ENCODE measurements at regions of chr7 and their contacts with region 1.

Region 1: GRCh38 chr7:106153891-106154449 is 41.9 kb upstream of the SYPL1 start:
- DNase-seq: peak; percentile 86
- H3K4me3 ChIP-seq: no peak overlapping the region; a peak in 1 of 4 replicates
- H3K27ac ChIP-seq: no peak overlapping the region
- H3K4me1 ChIP-seq: peaks cover 10 to 19% of the 10 kb centered on the region in 2 experiments; a peak in 2 of 4 replicates
- H3K27me3 ChIP-seq: no peaks in the 10 kb centered on the region; the same call in 1 of the 2 replicates
- CTCF ChIP-seq: peak; percentile 100
- EP300 ChIP-seq: no peak
- RAD21 ChIP-seq: peak; percentile 100

Region 2: GRCh38 chr7:106056513-106057203 is 97.3 kb before region 1 on chr7:
- CTCF ChIA-PET with region 1: interaction called, 593 read pairs
- POLR2A ChIA-PET with region 1: interaction called, 10 read pairs
- DNase-seq: peak; percentile 88
- H3K4me3 ChIP-seq: no peak overlapping the region
- H3K27ac ChIP-seq: peak overlapping the region in 1 of 2 experiments; percentile 96; a peak in 2 of 4 replicates
- H3K4me1 ChIP-seq: peaks cover 0 to 28% of the 10 kb centered on the region in 2 experiments; a peak in 2 of 4 replicates
- H3K27me3 ChIP-seq: no peaks in the 10 kb centered on the region
- CTCF ChIP-seq: peak; percentile 95
- EP300 ChIP-seq: 0 out of 4 replicates have a peak, but pooled peaks of 1 of the 2 experiments have one; percentile 26
- RAD21 ChIP-seq: peak; percentile 100

Region 3: DNA sequence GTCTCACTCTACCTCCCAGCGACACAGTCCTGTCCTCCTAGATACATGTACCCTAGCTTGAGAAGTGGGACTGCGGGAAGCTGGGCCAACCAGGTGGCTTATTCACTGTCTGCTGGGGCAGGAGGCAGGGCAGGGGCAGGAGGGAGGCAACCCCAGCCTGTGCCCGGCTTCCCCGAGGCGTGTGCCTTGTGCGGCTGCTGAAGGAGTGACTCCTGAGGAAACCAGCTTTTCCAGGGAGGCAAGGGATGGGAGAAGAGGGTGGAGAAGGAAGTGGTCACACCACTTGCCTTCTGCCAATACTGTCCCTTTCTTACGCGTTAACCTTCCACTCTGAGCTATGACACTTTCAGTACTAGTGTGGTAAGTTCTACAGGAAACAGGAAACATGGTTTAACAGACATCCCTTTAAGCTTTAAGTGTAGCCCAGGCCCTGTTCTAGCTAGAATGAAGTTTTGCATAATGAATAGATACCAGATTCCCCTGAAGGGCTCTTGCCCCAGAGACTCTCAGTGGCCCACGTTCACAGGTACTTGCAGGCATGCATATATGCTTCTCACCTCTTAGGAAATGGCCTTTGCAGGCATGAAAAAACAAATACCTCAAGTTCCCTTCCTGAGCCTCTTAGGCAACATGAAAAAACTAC is 82.5 kb before region 1 on chr7:
- CTCF ChIA-PET with region 1: interaction called, 109 read pairs
- POLR2A ChIA-PET with region 1: interaction called, 3 read pairs
- DNase-seq: peak; percentile 49
- H3K4me3 ChIP-seq: no peak overlapping the region
- H3K27ac ChIP-seq: peak overlapping the region in 1 of 2 experiments; percentile 81; a peak in 2 of 4 replicates
- H3K4me1 ChIP-seq: peaks cover 20 to 61% of the 10 kb centered on the region in 2 experiments
- H3K27me3 ChIP-seq: no peaks in the 10 kb centered on the region
- CTCF ChIP-seq: no peak
- EP300 ChIP-seq: no peak
- RAD21 ChIP-seq: no peak

Region 4: GRCh38 chr7:106102387-106102966 is 51.5 kb before region 1 on chr7:
- CTCF ChIA-PET with region 1: interaction called, 16 read pairs
- POLR2A ChIA-PET with region 1: no interaction called
- DNase-seq: no peak
- H3K4me3 ChIP-seq: no peak overlapping the region
- H3K27ac ChIP-seq: no peak overlapping the region
- H3K4me1 ChIP-seq: peaks cover 0 to 2% of the 10 kb centered on the region in 2 experiments; a peak in 1 of 4 replicates
- H3K27me3 ChIP-seq: no peaks in the 10 kb centered on the region
- CTCF ChIP-seq: no peak
- EP300 ChIP-seq: no peak
- RAD21 ChIP-seq: no peak

Region 5: GRCh38 chr7:106134241-106134640 is 19.7 kb before region 1 on chr7:
- CTCF ChIA-PET with region 1: interaction called, 24 read pairs
- POLR2A ChIA-PET with region 1: no interaction called
- DNase-seq: no peak
- H3K4me3 ChIP-seq: no peak overlapping the region
- H3K27ac ChIP-seq: no peak overlapping the region
- H3K4me1 ChIP-seq: peaks cover 0 to 4% of the 10 kb centered on the region in 2 experiments; a peak in 1 of 4 replicates
- H3K27me3 ChIP-seq: no peaks in the 10 kb centered on the region
- CTCF ChIP-seq: no peak
- EP300 ChIP-seq: no peak
- RAD21 ChIP-seq: no peak

Region 6: GRCh38 chr7:106166655-106167342 is 12.8 kb after region 1 on chr7:
- CTCF ChIA-PET with region 1: interaction called, 199 read pairs
- POLR2A ChIA-PET with region 1: no interaction called
- DNase-seq: peak; percentile 73
- H3K4me3 ChIP-seq: no peak overlapping the region; a peak in 1 of 4 replicates
- H3K27ac ChIP-seq: no peak overlapping the region
- H3K4me1 ChIP-seq: no peaks in the 10 kb centered on the region; a peak in 1 of 4 replicates
- H3K27me3 ChIP-seq: no peaks in the 10 kb centered on the region
- CTCF ChIP-seq: peak; percentile 95
- EP300 ChIP-seq: no peak
- RAD21 ChIP-seq: peak; percentile 92

Region 7: GRCh38 chr7:106405697-106406141 is 251.7 kb after region 1 on chr7:
- CTCF ChIA-PET with region 1: no interaction called
- POLR2A ChIA-PET with region 1: no interaction called
- DNase-seq: no peak
- H3K4me3 ChIP-seq: no peak overlapping the region
- H3K27ac ChIP-seq: no peak overlapping the region
- H3K4me1 ChIP-seq: no peaks in the 10 kb centered on the region
- H3K27me3 ChIP-seq: no peaks in the 10 kb centered on the region; the same call in 1 of the 2 replicates
- CTCF ChIP-seq: no peak
- EP300 ChIP-seq: no peak
- RAD21 ChIP-seq: no peak